Panc1 (cell line): ENCODE measurements at regions of chr16 and their contacts with region 1.

Region 1: GRCh38 chr16:46673320-46674013 is 15.5 kb downstream of the VPS35 start:
- DNase-seq: no peak
- ATAC-seq: peak; percentile 96
- H3K4me3 ChIP-seq: no peak overlapping the region
- H3K27ac ChIP-seq: no peak overlapping the region
- H3K4me1 ChIP-seq: no peaks in the 10 kb centered on the region
- H3K27me3 ChIP-seq: no peaks in the 10 kb centered on the region
- CTCF ChIP-seq: peak; percentile 92

Region 2: GRCh38 chr16:46629331-46630219 is 43.9 kb before region 1 on chr16:
- CTCF ChIA-PET with region 1: no interaction called
- POLR2A ChIA-PET with region 1: no interaction called
- in situ Hi-C with region 1: no loop called
- intact Hi-C with region 1: no loop called
- DNase-seq: no peak
- ATAC-seq: peak; percentile 62
- H3K4me3 ChIP-seq: peak overlapping the region in 1 of 2 experiments; percentile 29; a peak in 2 of 4 replicates
- H3K27ac ChIP-seq: no peak overlapping the region
- H3K4me1 ChIP-seq: no peaks in the 10 kb centered on the region
- H3K27me3 ChIP-seq: no peaks in the 10 kb centered on the region
- CTCF ChIP-seq: peak; percentile 69

Region 3: GRCh38 chr16:46801428-46802049 is 128.1 kb after region 1 on chr16:
- CTCF ChIA-PET with region 1: interaction called, 7 read pairs
- POLR2A ChIA-PET with region 1: no interaction called
- in situ Hi-C with region 1: no loop called
- intact Hi-C with region 1: loop called (anchors 5 kb)
- DNase-seq: no peak
- ATAC-seq: peak; percentile 62; the same call in 1 of the 2 replicates
- H3K4me3 ChIP-seq: no peak overlapping the region
- H3K27ac ChIP-seq: no peak overlapping the region
- H3K4me1 ChIP-seq: no peaks in the 10 kb centered on the region
- H3K27me3 ChIP-seq: no peaks in the 10 kb centered on the region
- CTCF ChIP-seq: peak; percentile 62

Region 4: DNA sequence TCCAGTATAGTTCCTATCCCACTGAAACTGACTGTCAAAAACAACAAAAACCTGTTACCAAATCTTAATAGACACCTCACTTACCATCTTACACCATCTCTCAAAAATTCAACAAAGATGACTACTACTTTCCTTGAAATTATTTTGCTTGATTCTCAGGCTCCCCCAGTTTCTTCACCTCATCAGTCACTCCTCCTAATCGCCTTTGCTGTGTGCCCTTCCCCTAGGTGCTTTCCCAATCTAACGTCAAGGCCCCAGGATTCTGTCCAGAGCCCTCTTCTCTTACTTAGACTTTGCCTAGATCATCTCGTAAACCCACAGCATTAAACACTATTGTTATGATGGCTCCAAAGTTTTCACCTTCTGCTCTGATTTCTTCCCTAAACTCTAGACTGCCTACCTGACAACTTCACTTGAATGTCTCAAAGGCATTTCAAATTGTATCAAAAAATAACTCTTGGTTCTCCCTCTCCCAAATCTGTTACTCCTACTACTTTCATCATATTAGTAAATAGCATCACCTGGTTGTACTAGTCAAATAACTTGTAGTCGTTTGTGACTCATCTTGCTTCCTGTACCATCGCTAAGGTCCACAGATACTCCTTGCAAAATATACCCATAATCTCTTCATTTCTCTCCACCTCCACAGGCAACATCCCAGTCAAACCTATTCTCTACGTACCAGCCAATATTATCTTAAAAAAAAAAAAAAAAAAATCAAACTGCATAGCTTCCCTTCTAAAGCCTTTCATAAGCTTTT is 139.5 kb after region 1 on chr16:
- CTCF ChIA-PET with region 1: no interaction called
- POLR2A ChIA-PET with region 1: no interaction called
- in situ Hi-C with region 1: no loop called
- intact Hi-C with region 1: no loop called
- DNase-seq: no peak
- ATAC-seq: no peak
- H3K4me3 ChIP-seq: no peak overlapping the region
- H3K27ac ChIP-seq: no peak overlapping the region
- H3K4me1 ChIP-seq: no peaks in the 10 kb centered on the region; the same call in none of the 2 replicates
- H3K27me3 ChIP-seq: no peaks in the 10 kb centered on the region
- CTCF ChIP-seq: no peak